Activated CD4-positive, alpha-beta T cell treated with anti-CD3 and anti-CD28 coated beads for 36 hours (primary cell): ENCODE measurements at regions of chr9 and their contacts with region 1.

Region 1: DNA sequence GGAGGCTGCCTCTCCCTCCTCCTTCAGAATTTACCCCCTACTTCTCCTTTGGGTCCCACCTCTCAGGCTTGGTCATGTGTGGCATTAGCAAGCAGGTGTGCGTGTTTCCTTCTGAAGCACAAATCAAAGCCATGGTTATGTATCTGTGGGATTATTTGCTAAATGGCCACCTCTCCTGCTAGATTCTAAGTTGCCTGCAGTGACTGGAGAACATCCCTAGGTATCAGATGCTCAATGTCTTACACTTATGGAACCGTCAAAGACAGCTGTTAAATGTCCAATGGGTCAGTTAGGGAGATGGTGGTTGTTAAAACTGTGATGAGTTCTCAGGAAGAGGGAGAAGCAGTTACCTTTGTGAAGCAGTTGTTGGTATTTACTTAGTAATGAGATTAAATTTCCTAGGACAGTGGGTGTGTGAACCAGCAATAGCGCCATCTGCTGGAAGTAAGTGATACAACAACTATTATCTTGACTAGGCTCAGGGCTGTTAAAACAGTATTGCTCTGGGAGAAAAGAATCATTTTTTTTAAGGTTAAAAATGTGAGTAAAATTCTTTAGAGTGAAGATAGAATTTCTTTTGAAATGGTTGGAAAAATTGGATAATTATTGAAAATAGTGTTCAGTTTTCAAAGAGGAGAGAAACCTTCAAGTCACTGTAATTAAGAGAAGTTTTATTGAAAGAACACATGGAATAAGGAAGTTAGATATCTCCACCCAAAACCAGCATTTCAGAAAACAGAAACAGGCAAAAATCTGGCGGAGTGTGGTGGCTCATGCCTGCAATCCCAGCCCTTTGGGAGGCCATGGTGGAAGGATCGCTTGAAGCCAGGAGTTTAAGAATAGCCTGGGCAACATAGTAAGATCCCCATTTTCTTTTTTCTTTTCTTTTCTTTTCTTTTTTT is 71.3 kb downstream of the TMC1 start:
- DNase-seq: peak; percentile 29
- ATAC-seq: peak; percentile 69
- H3K4me3 Mint-ChIP-seq: no peak overlapping the region
- H3K27ac Mint-ChIP-seq: no peak overlapping the region
- H3K4me1 Mint-ChIP-seq: peaks cover 19% of the 10 kb centered on the region
- H3K27me3 Mint-ChIP-seq: peaks cover 6% of the 10 kb centered on the region

Region 2: DNA sequence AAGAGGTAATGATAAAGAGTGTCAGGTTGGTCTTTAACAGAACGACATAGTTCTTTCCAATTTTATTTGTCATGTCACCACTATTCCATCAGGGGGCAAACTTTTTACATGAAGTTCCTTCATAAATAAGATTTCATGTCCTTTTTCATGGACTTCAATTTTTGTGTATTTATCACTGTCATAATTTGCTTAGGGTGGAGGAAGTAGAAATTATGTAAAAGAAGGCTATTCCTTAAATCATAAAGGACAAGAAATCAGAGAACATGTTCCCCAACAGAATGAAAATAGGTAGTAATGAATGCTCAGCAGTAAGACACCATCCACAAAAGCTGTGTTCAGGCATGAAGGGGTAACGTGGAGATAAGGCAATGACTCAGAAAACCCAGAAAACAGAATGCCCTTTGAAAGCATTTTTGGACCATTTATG is 300.5 kb before region 1 on chr9:
- CTCF ChIA-PET with region 1: interaction called, 3 read pairs
- POLR2A ChIA-PET with region 1: no interaction called
- intact Hi-C with region 1: loop called (anchors 1 kb)
- DNase-seq: no peak
- ATAC-seq: no peak
- H3K4me3 Mint-ChIP-seq: no peak overlapping the region
- H3K27ac Mint-ChIP-seq: no peak overlapping the region
- H3K4me1 Mint-ChIP-seq: peaks cover 3% of the 10 kb centered on the region
- H3K27me3 Mint-ChIP-seq: peaks cover 3% of the 10 kb centered on the region

Region 3: DNA sequence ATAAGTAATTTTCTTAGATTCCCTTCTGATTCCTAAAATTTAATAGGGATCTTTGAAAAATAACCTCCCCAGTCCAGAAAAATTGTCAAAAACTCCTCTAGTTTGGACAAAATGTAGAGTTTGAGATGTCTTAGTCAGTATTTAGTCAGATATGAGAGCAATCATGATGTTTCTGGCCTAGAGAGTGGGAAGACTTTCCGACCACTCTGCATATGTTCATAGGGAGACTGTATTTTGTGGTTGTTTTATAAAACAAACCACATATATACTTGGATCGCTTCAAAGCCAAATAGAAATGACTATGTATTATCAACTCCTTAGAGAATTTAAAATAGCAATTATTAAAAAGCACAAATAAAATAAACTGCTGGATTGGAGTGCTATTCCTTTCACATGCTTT is 243.5 kb before region 1 on chr9:
- CTCF ChIA-PET with region 1: interaction called, 3 read pairs
- POLR2A ChIA-PET with region 1: no interaction called
- intact Hi-C with region 1: loop called in 1 of 2 experiments (anchors 5 kb)
- DNase-seq: peak; percentile 20
- ATAC-seq: peak; percentile 39
- H3K4me3 Mint-ChIP-seq: no peak overlapping the region
- H3K27ac Mint-ChIP-seq: no peak overlapping the region
- H3K4me1 Mint-ChIP-seq: peaks cover 10% of the 10 kb centered on the region
- H3K27me3 Mint-ChIP-seq: no peaks in the 10 kb centered on the region

Region 4: GRCh38 chr9:72443855-72444254 is 148.9 kb before region 1 on chr9:
- CTCF ChIA-PET with region 1: interaction called, 4 read pairs
- POLR2A ChIA-PET with region 1: no interaction called
- intact Hi-C with region 1: loop called in 1 of 2 experiments (anchors 5 kb)
- DNase-seq: peak; percentile 8
- ATAC-seq: peak; percentile 72
- H3K4me3 Mint-ChIP-seq: no peak overlapping the region
- H3K27ac Mint-ChIP-seq: peak overlapping the region; percentile 55
- H3K4me1 Mint-ChIP-seq: peaks cover 24% of the 10 kb centered on the region
- H3K27me3 Mint-ChIP-seq: no peaks in the 10 kb centered on the region

Region 5: GRCh38 chr9:72473474-72474261 is 119.1 kb before region 1 on chr9:
- CTCF ChIA-PET with region 1: no interaction called
- POLR2A ChIA-PET with region 1: no interaction called
- intact Hi-C with region 1: loop called in 1 of 2 experiments (anchors 5 kb)
- DNase-seq: no peak
- ATAC-seq: peak; percentile 83
- H3K4me3 Mint-ChIP-seq: no peak overlapping the region
- H3K27ac Mint-ChIP-seq: peak overlapping the region; percentile 88
- H3K4me1 Mint-ChIP-seq: peaks cover 40% of the 10 kb centered on the region
- H3K27me3 Mint-ChIP-seq: no peaks in the 10 kb centered on the region

Region 6: DNA sequence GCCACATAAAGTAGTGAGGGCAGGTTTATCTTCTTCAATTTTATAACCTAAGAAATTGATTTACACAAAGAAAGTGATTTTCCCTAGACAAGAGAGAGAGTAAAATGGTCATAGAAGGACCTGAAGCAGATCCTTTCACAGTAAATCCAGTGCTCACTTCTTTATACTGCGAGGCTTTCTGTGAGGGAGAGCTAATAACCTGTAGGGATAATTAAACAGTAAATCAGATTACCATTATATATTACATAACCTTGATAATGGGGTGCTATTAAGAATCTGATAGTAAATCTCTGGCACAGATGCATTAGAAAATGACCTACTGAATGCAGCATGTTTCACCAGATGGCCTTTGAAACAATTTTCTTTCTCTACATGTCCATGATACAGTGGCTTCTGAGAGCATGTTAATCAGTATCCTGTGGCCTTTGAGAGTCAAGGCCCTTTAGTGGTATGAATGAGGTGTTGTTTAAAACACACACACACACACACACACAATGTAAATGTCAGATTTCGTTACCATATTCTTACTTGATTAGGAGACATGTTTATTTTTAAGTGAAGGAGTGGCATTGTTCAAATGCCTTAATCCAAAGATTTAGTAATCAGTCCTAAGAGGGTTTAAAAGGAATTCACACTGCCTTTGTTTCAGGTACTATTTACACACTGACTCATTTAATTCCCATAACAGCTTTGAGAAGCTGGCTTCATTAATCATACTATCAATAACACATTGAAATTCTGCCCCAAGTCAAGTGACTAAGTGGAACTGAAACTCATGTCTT is 235.4 kb after region 1 on chr9:
- CTCF ChIA-PET with region 1: no interaction called
- POLR2A ChIA-PET with region 1: no interaction called
- intact Hi-C with region 1: loop called in 1 of 2 experiments (anchors 10 kb)
- DNase-seq: no peak
- ATAC-seq: no peak
- H3K4me3 Mint-ChIP-seq: no peak overlapping the region
- H3K27ac Mint-ChIP-seq: no peak overlapping the region
- H3K4me1 Mint-ChIP-seq: no peaks in the 10 kb centered on the region
- H3K27me3 Mint-ChIP-seq: peaks cover 6% of the 10 kb centered on the region